A549 (cell line): ENCODE measurements at regions of chr1 and their contacts with region 1.

Region 1: DNA sequence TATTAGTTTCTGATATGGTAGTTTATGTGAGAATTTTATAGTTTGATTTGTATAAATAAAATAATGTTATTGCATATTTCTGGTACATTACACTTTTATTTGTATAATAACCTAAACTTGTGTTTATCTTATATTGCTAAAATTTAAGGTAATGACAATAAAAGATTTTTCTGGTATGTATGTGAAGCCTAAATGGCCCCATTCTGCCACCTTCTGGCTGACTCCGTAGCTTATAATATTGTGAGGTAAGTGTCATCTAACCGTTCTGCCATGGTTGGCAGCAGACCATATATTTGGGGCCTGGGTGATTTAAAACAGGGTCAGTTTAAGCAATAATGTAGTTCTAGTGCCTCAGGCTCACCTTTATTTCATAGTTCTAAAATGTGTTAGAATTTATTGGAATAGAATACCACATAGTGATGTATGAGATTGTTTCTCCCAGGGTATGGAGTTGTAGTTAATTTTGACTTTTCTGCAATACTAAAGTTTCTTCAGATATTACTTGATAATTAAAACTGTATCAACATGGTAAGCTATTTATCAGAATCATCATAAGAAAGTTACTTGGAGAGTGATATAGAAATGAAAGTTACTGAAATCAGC is 21.2 kb upstream of the PRKACB start:
- DNase-seq: peak; percentile 7 to 46
- ATAC-seq: peak in 1 of 2 experiments; percentile 78; a peak in 3 of 6 replicates
- H3K4me3 ChIP-seq: no peak overlapping the region
- H3K27ac ChIP-seq: no peak overlapping the region
- H3K4me1 ChIP-seq: no peaks in the 10 kb centered on the region
- CTCF ChIP-seq: peak; percentile 78
- EP300 ChIP-seq: no peak
- POLR2A ChIP-seq: no peak
- RAD21 ChIP-seq: peak; percentile 83 to 84

Region 2: DNA sequence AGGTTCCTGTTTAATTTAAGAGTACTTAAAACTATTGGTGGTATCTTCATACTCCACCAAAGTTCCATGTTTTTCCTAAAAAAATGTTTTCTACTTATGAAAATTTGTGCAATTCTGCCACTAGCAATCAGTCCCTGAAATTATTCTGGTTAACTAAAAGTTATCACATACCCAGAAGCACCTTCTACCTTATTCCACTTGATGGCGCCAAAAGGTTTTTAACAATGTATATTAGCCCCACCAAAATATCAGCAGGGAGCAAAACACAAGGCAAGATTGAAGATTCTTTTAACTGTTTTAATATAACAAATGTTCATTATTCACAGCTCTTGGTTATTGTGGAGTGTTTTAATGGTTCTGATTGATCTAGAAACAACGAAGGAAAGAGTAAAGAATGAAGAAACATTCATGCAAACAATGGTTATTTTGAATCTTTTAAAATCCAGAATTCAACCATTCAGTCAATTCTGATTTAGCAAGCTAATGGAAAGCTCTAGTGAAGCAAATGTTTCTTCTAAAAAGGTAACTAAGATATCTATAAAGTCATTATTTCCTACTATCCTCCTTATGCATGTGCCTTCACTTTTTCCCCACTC is 191.1 kb before region 1 on chr1:
- CTCF ChIA-PET with region 1: interaction called, 14 read pairs
- POLR2A ChIA-PET with region 1: no interaction called
- DNase-seq: peak; percentile 31 to 35
- ATAC-seq: peak in 1 of 2 experiments; percentile 79; a peak in 3 of 6 replicates
- H3K4me3 ChIP-seq: no peak overlapping the region
- H3K27ac ChIP-seq: no peak overlapping the region
- H3K4me1 ChIP-seq: peaks cover 7% of the 10 kb centered on the region; the same call in 1 of the 3 replicates
- CTCF ChIP-seq: peak; percentile 67
- EP300 ChIP-seq: no peak
- POLR2A ChIP-seq: no peak
- RAD21 ChIP-seq: peak; percentile 76 to 78

Region 3: GRCh38 chr1:84141177-84142003 is 18.5 kb after region 1 on chr1:
- CTCF ChIA-PET with region 1: no interaction called
- POLR2A ChIA-PET with region 1: no interaction called
- DNase-seq: no peak
- ATAC-seq: no peak
- H3K4me3 ChIP-seq: no peak overlapping the region
- H3K27ac ChIP-seq: no peak overlapping the region; a peak in 1 of 6 replicates
- H3K4me1 ChIP-seq: peaks cover 32% of the 10 kb centered on the region
- CTCF ChIP-seq: peak; percentile 63
- EP300 ChIP-seq: no peak
- POLR2A ChIP-seq: no peak
- RAD21 ChIP-seq: peak; percentile 69 to 78